ENCODE measurements at regions of chr4 and their contacts with region 1.

Region 1: DNA sequence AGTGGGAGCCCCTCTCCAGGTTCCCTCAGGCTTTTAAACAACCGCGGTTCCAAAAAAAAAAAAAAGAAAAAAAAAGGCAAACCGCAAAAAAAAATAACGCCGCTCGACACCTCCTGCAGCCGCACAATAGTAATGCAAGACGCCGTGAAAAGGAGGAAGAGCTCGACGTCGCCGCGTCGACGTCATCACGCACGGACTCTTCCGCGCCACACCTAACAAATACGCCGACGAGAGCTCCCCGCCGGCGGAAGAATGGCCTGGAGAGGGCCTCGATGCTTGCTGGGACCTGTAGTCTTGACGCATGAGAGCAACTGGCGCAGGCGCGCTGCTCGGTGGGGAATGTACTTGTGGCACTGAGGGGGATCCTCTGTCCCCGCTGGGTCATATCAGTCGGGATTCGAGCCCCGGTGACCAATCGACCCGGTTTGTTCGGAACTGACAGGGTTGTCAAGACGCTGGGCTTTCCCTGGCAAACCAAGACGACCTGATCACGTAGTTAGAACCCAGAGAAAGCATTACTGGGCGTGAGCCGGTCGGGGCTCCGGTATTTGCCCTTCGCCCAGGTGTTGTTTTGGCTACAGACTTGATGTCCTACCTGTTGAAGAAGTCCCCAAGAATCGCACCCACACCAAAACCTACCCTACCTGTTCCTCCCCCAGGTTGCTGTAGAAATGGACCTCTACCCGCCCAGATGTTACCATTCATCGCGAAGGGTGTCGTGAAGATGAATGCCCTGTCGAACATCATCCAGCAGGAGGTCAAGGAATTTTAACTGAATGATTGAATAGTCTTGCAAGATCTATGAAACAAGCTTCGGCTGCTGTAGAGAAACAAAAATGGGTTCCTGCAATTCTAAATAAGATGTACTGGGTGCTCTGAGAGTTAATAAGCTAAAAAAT is at the start of gene CBR4:
- DNase-seq: peak; percentile 97
- H3K4me3 ChIP-seq: peak within 1 kb of the TSS; percentile 93
- H3K27ac ChIP-seq: peak within 1 kb of the TSS; percentile 64
- H3K4me1 ChIP-seq: peaks cover 32% of the 10 kb centered on the region
- CTCF ChIP-seq: no peak
- total RNA-seq, gene CBR4: 18.7 and 21.9 TPM in 2 replicates

Region 2: DNA sequence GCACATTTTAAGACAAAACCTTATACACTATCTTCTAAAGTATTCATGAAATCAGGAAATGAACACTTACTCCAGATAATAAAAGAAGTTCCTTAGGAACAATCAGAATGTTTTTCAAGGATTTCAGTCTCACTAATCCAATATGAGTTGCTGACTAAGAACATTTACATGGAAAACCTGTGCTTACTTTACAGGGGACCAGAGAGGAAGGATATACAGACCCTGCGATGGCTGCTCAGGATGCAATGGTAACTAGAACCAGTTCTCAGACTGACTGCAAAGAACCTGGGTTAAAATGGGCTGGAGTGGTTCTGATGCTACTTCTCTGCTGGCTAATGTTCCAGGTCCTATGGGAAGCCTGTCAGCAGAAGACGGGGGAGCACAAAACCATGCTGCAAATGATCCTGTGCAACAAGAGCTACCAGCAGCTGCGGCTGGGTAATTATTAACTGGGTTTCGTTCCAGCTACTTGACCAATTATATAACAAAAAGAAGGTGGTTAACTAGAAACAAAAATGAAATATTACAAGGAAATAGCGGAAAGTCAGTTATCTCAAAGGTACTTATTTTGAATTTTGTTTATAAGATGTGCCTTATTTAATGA is 832.7 kb before region 1 on chr4:
- CTCF ChIA-PET with region 1: no interaction called
- POLR2A ChIA-PET with region 1: no interaction called
- intact Hi-C with region 1: no loop called
- DNase-seq: no peak
- H3K4me3 ChIP-seq: no peak overlapping the region
- H3K27ac ChIP-seq: no peak overlapping the region
- H3K4me1 ChIP-seq: no peaks in the 10 kb centered on the region
- CTCF ChIP-seq: no peak

Region 3: GRCh38 chr4:168907119-168907698 is 103.2 kb before region 1 on chr4:
- CTCF ChIA-PET with region 1: no interaction called
- POLR2A ChIA-PET with region 1: no interaction called
- intact Hi-C with region 1: no loop called
- DNase-seq: no peak
- H3K4me3 ChIP-seq: no peak overlapping the region
- H3K27ac ChIP-seq: no peak overlapping the region
- H3K4me1 ChIP-seq: no peaks in the 10 kb centered on the region
- CTCF ChIP-seq: no peak

Region 4: GRCh38 chr4:168923526-168924194 is 86.7 kb before region 1 on chr4:
- CTCF ChIA-PET with region 1: no interaction called
- POLR2A ChIA-PET with region 1: no interaction called
- intact Hi-C with region 1: loop called (anchors 2 kb)
- DNase-seq: peak; percentile 66
- H3K4me3 ChIP-seq: no peak overlapping the region
- H3K27ac ChIP-seq: no peak overlapping the region
- H3K4me1 ChIP-seq: no peaks in the 10 kb centered on the region
- CTCF ChIP-seq: peak; percentile 89

Region 5: DNA sequence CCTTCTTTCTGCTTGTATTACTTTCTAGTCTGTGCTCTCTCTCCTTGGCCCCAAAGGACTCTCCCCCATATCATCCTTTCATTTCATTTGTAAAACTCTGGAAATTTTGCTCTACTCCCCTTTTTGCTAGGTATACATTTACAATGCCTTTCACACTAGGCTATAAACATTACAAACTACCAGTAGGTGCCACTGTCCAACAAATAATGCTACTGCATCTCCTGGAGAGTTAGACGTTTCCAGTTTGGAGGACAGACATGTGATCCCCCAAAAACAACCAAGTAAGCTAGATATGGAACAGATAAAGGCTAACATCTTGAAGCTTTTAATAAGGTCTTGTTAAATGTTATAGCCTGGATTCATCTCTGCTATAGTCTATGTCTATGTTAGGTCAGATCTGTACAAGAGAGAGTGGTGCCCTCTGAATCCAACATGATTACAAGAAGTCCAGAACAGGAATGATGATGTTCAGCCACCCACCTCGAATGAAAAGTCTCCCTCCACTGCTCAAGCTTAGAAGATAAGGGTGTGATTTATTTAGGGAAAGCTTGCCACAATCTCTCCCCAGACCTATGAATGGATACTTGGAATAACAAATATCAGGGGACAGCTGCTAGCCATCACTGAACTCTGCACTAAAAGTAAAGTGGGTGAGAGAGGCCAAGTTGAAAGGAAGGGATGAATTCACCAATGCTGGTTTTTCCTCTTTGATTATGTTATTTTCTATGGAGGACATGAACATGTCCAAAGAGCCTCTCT is 14.7 kb before region 1 on chr4:
- CTCF ChIA-PET with region 1: interaction called, 7 read pairs
- POLR2A ChIA-PET with region 1: interaction called, 27 read pairs
- intact Hi-C with region 1: no loop called
- DNase-seq: no peak
- H3K4me3 ChIP-seq: no peak overlapping the region
- H3K27ac ChIP-seq: no peak overlapping the region
- H3K4me1 ChIP-seq: no peaks in the 10 kb centered on the region
- CTCF ChIP-seq: peak; percentile 39; the same call in 1 of the 2 replicates

Region 6: GRCh38 chr4:169619959-169620879 is 609.8 kb after region 1 on chr4 and contains the start of gene CLCN3:
- CTCF ChIA-PET with region 1: no interaction called
- POLR2A ChIA-PET with region 1: no interaction called
- intact Hi-C with region 1: loop called (anchors 10 kb)
- DNase-seq: peak; percentile 98
- H3K4me3 ChIP-seq: peak within 1 kb of the TSS; percentile 75
- H3K27ac ChIP-seq: peak within 1 kb of the TSS; percentile 93
- H3K4me1 ChIP-seq: peaks cover 34% of the 10 kb centered on the region
- CTCF ChIP-seq: no peak
- total RNA-seq, gene CLCN3: 17.8 and 23.0 TPM in 2 replicates

Region 7: DNA sequence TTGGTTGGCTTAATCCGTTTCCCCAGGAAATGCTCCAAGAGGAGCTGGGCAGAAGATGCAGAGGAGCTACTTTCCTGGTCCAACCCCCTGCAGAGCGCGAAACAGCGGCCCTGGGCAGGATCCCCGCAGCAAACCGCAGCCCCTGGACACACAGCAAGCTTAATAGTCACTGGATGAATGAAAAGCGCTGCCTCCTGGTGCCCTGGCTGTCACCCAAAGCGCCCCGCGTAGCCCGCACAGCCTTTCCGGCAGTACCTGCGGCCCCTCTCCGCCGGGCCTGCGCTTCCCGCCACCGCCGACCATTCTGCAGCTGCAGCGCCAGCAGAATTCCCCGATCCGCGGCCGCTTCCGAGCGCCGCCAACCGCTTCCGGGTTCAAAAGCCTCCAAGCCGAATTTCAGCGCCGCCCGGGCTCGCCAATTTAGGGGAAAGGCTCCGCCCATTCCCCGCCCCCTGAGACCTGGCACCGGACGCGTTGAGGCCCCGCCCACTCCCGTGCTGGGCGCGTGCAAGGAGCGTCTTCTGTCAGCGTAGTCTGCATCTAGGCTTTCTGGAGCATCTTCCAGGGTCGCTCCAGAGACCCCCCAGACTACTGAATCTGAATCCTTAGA is 747.3 kb after region 1 on chr4 and contains the start of gene HPF1:
- CTCF ChIA-PET with region 1: no interaction called
- POLR2A ChIA-PET with region 1: interaction called, 3 read pairs
- intact Hi-C with region 1: loop called (anchors 5 kb)
- DNase-seq: peak; percentile 94
- H3K4me3 ChIP-seq: peak within 1 kb of the TSS; percentile 91
- H3K27ac ChIP-seq: peak within 1 kb of the TSS; percentile 21
- H3K4me1 ChIP-seq: peaks cover 19% of the 10 kb centered on the region
- CTCF ChIP-seq: 0 out of 2 replicates have a peak, but pooled peaks have one; percentile 12
- total RNA-seq, gene HPF1: 11.8 and 14.6 TPM in 2 replicates

Measured in OCI-LY7 (cell line).